Endothelial cell of umbilical vein (primary cell): ENCODE measurements at regions of chr11 and their contacts with region 1.

Region 1: GRCh38 chr11:77547863-77548551 is 41.7 kb upstream of the AQP11 start:
- DNase-seq: peak; percentile 58
- H3K4me3 ChIP-seq: no peak overlapping the region
- H3K27ac ChIP-seq: no peak overlapping the region
- H3K4me1 ChIP-seq: no peaks in the 10 kb centered on the region
- H3K27me3 ChIP-seq: no peaks in the 10 kb centered on the region
- CTCF ChIP-seq: peak; percentile 40 to 53
- POLR2A ChIP-seq: no peak

Region 2: GRCh38 chr11:77175869-77176539 is 372.0 kb before region 1 on chr11:
- CTCF ChIA-PET with region 1: interaction called, 10 read pairs
- POLR2A ChIA-PET with region 1: no interaction called
- dilution Hi-C with region 1: no loop called
- intact Hi-C with region 1: no loop called
- DNase-seq: no peak
- H3K4me3 ChIP-seq: no peak overlapping the region
- H3K27ac ChIP-seq: no peak overlapping the region
- H3K4me1 ChIP-seq: peaks cover 9% of the 10 kb centered on the region
- H3K27me3 ChIP-seq: no peaks in the 10 kb centered on the region
- CTCF ChIP-seq: no peak
- POLR2A ChIP-seq: no peak

Region 3: DNA sequence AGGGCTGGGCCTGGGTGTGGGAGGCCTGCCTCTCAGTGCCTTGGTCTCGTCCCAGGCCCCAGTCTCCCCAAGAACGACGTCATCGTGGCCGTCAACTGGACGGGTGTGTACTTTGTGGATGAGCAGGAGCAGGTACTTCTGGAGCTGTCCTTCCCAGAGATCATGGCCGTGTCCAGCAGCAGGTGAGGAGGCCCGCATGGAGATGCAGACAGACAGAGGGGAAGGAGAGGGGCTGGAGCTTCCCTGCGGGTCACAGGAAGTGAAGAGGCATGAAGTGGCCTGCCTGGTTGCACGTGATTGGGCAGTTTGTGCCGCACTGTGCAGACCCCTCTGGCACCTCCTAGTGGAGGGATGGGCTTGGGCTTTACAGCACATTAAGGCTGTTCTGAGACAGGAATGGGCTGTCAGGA is 349.6 kb before region 1 on chr11:
- CTCF ChIA-PET with region 1: interaction called, 235 read pairs
- POLR2A ChIA-PET with region 1: no interaction called
- dilution Hi-C with region 1: no loop called
- intact Hi-C with region 1: loop called (anchors 1 kb)
- DNase-seq: peak; percentile 11
- H3K4me3 ChIP-seq: no peak overlapping the region
- H3K27ac ChIP-seq: no peak overlapping the region
- H3K4me1 ChIP-seq: no peaks in the 10 kb centered on the region
- H3K27me3 ChIP-seq: no peaks in the 10 kb centered on the region
- CTCF ChIP-seq: peak; percentile 43 to 47
- POLR2A ChIP-seq: no peak

Region 4: GRCh38 chr11:77411717-77412441 is 136.1 kb before region 1 on chr11:
- CTCF ChIA-PET with region 1: interaction called, 11 read pairs
- POLR2A ChIA-PET with region 1: no interaction called
- dilution Hi-C with region 1: no loop called
- intact Hi-C with region 1: no loop called
- DNase-seq: peak; percentile 62
- H3K4me3 ChIP-seq: peak overlapping the region; percentile 31 to 38 (median 34)
- H3K27ac ChIP-seq: no peak overlapping the region
- H3K4me1 ChIP-seq: peaks cover 20% of the 10 kb centered on the region
- H3K27me3 ChIP-seq: peaks cover 0 to 3% of the 10 kb centered on the region in 2 experiments
- CTCF ChIP-seq: no peak
- POLR2A ChIP-seq: peak; percentile 27

Region 5: DNA sequence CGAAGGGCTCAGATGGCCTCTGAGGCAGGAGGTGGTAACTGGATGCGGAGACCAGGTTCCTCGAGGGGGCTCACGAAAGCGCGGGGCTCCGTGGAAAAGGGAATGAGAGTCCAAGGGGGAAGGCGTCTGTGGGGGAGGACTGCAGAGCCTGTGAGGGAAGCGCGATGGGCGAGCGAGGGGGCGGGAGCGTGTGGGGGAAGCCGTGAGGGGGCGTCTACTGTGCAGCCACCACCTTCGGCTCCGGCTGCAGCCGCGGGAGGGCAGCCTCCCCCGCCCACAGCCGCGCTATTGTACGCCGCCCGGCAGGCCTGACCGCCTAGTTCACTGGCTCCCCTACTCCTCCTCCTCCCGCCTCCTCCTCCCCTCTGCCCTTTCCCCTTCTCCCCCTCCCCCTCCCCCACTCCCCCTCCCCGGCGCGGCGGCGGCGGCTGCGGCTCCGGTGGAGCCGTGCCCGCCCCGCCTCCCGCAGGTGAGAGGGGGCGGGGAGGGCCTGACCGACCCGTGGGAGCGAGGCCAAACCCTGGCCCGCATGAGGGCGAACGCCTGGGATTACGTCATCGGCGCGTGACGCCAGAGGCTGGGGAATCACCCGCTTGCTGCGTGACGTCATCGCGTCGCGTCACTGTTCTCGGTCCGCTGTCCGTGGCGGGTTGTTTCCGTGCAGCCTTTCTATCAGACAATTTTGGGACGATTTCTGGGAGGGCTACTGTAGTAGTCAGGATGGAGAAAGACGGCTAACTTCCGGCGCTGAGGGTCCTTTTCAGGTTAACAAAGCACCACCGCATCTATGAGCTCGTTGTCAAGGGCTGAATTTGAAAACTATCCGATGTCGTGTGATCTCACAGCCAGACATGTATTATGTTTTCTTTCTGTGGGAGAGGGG is 74.0 kb before region 1 on chr11 and contains the start of gene PAK1:
- CTCF ChIA-PET with region 1: interaction called, 38 read pairs
- POLR2A ChIA-PET with region 1: no interaction called
- dilution Hi-C with region 1: no loop called
- intact Hi-C with region 1: loop called (anchors 1 kb)
- DNase-seq: peak; percentile 49
- H3K4me3 ChIP-seq: peak within 1 kb of the TSS; percentile 13 to 46 (median 23)
- H3K27ac ChIP-seq: no peak within 1 kb of the TSS
- H3K4me1 ChIP-seq: peaks cover 3% of the 10 kb centered on the region
- H3K27me3 ChIP-seq: peaks cover 19 to 43% of the 10 kb centered on the region in 2 experiments
- CTCF ChIP-seq: peak in 1 of 2 donors; percentile 44
- POLR2A ChIP-seq: no peak
- total RNA-seq, gene PAK1: 11.2 and 12.9 TPM in 2 replicates

Region 6: DNA sequence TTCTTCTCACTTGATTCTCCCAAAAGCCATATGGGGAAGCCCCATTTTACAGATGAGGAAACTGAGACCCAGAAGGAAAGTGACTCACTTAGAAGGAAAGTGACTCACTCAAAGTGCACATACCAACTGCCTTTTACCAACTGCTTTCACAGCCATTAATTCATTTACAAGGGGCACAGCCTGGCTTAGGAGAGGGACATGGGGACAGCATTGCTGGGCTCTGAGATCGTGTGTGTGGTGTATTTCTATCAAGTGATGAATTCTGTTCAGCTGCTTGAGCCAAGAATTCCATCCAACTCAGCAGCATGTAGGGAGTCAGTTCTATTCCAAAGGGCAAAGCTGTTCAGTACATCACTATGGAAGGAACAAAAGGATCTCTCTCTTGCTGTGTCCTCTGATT is 50.6 kb before region 1 on chr11:
- CTCF ChIA-PET with region 1: interaction called, 13 read pairs
- POLR2A ChIA-PET with region 1: no interaction called
- dilution Hi-C with region 1: no loop called
- intact Hi-C with region 1: no loop called
- DNase-seq: no peak
- H3K4me3 ChIP-seq: no peak overlapping the region
- H3K27ac ChIP-seq: no peak overlapping the region
- H3K4me1 ChIP-seq: no peaks in the 10 kb centered on the region
- H3K27me3 ChIP-seq: peaks cover 4 to 7% of the 10 kb centered on the region in 2 experiments
- CTCF ChIP-seq: no peak
- POLR2A ChIP-seq: no peak